ENCODE measurements at regions of chr10 and their contacts with region 1.

Region 1: GRCh38 chr10:86110156-86110786 is 256.3 kb downstream of the GRID1 start:
- DNase-seq: peak in 1 of 2 experiments; percentile 69
- H3K4me3 ChIP-seq: no peak overlapping the region
- H3K27ac ChIP-seq: no peak overlapping the region
- H3K4me1 ChIP-seq: no peaks in the 10 kb centered on the region
- H3K27me3 ChIP-seq: no peaks in the 10 kb centered on the region
- CTCF ChIP-seq: peak; percentile 66 to 88 (median 85)
- EP300 ChIP-seq: no peak
- POLR2A ChIP-seq: no peak
- RAD21 ChIP-seq: peak; percentile 56 to 68

Region 2: GRCh38 chr10:86024281-86025041 is 85.8 kb before region 1 on chr10:
- CTCF ChIA-PET with region 1: no interaction called
- POLR2A ChIA-PET with region 1: no interaction called
- DNase-seq: no peak
- H3K4me3 ChIP-seq: no peak overlapping the region
- H3K27ac ChIP-seq: no peak overlapping the region
- H3K4me1 ChIP-seq: no peaks in the 10 kb centered on the region; a peak in 1 of 7 replicates
- H3K27me3 ChIP-seq: no peaks in the 10 kb centered on the region
- CTCF ChIP-seq: peak in 2 of 3 experiments; percentile 12 to 23; a peak in 2 of 4 replicates
- EP300 ChIP-seq: no peak
- POLR2A ChIP-seq: no peak
- RAD21 ChIP-seq: peak in 1 of 2 experiments; percentile 4; a peak in 1 of 4 replicates

Region 3: GRCh38 chr10:86090807-86091206 is 19.5 kb before region 1 on chr10:
- CTCF ChIA-PET with region 1: interaction called, 15 read pairs
- POLR2A ChIA-PET with region 1: no interaction called
- DNase-seq: no peak
- H3K4me3 ChIP-seq: no peak overlapping the region
- H3K27ac ChIP-seq: no peak overlapping the region
- H3K4me1 ChIP-seq: peaks cover 0 to 3% (median 0%) of the 10 kb centered on the region in 4 experiments; a peak in 2 of 7 replicates
- H3K27me3 ChIP-seq: no peaks in the 10 kb centered on the region
- CTCF ChIP-seq: no peak
- EP300 ChIP-seq: no peak
- POLR2A ChIP-seq: no peak
- RAD21 ChIP-seq: no peak

Region 4: DNA sequence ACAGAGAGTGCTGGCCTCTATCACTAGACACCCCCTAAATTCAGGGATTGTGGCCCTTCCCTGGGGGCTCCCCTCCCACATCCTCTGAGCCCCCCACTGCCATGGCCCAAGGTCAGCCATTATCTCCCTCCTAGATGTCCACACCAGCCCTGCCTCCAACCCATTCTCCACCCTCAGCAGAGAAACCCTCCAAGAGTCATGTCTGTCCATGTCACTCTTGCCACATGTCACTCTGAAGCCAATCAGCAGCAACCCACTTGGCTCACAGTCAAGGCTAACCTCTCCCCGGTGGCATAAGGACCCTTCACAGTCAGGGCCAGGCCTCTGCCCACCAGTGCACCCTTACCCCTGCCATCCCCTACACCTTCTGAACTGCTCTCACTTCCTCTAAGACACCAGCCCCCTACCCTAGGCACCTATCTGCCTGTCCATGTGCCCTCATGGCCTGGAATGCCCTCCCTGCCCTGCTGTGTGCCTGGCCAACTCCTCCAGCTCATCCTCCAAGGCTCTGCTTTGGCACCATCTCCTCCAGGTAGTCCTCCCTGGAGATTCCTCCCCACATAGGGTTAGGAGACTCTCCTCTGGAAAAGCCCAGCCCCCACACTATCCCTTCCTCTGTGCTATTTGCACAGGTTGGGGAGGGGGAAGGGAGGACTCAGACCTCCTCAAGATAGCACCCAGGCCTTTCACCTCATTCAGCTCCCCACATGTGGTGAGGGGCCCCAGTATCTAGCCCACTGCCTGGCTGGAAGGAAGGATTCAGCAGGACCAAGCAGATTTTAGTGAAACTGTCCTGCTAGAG is 172.6 kb after region 1 on chr10:
- CTCF ChIA-PET with region 1: no interaction called
- POLR2A ChIA-PET with region 1: no interaction called
- DNase-seq: peak in 1 of 2 experiments; percentile 35
- H3K4me3 ChIP-seq: no peak overlapping the region
- H3K27ac ChIP-seq: no peak overlapping the region
- H3K4me1 ChIP-seq: no peaks in the 10 kb centered on the region
- H3K27me3 ChIP-seq: no peaks in the 10 kb centered on the region
- CTCF ChIP-seq: no peak
- EP300 ChIP-seq: no peak
- POLR2A ChIP-seq: no peak
- RAD21 ChIP-seq: no peak